Sigmoid colon (tissue), 7 donors: ENCODE measurements at regions of chr12 and their contacts with region 1.

Region 1: DNA sequence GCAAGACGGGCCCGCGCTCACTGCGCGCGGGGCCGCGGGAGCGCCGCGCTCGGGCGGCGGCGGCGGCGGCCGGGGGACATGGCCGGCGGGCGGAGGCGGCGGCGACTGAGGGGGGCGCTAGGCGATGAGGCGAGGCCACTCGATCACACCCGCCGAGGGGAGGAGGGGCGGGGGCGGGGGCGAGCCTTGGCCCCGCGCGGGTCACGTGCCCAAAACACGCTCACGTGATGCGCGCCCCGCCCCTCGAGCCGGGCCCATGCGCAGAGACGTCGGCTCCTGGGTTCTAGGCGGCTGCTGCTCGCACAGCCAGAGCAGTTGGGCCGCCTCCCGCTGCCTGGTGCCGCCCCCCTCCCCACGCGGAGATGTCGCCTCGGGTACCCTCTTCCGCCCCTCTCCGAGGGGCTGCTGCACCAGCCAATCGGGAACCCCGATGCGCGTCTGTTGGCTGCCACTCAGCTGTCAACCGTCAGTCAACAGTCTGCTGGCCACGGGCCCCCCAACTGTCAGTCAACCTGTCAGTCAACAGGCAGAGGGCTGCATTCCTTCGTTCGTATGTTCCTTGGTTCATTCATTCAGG is at the start of gene SPPL3:
- DNase-seq: peak; percentile 95
- H3K4me3 ChIP-seq: peak within 1 kb of the TSS; percentile 72 to 100 (median 92)
- H3K27ac ChIP-seq: peak within 1 kb of the TSS; percentile 84 to 96 (median 89)
- H3K4me1 ChIP-seq: peaks cover 0 to 25% (median 18%) of the 10 kb centered on the region in 4 donors
- H3K27me3 ChIP-seq: no peaks in the 10 kb centered on the region
- CTCF ChIP-seq: no peak
- EP300 ChIP-seq: peak in 1 of 4 donors; percentile 28
- POLR2A ChIP-seq: peak; percentile 27 to 45
- total RNA-seq, gene SPPL3: 17.1 to 28.0 (median 19.3) TPM

Region 2: GRCh38 chr12:120725659-120726509 is 178.4 kb before region 1 on chr12 and contains the start of gene ACADS:
- intact Hi-C with region 1: loop called (anchors 2 kb)
- DNase-seq: peak; percentile 95
- H3K4me3 ChIP-seq: peak within 1 kb of the TSS; percentile 53 to 82 (median 72)
- H3K27ac ChIP-seq: peak within 1 kb of the TSS; percentile 81 to 86 (median 85)
- H3K4me1 ChIP-seq: peaks cover 0 to 21% (median 20%) of the 10 kb centered on the region in 4 donors
- H3K27me3 ChIP-seq: no peaks in the 10 kb centered on the region
- CTCF ChIP-seq: peak in 1 of 4 experiments; percentile 8
- EP300 ChIP-seq: no peak
- POLR2A ChIP-seq: peak; percentile 26 to 28
- total RNA-seq, gene ACADS: 36.8 to 40.3 (median 39.1) TPM

Region 3: DNA sequence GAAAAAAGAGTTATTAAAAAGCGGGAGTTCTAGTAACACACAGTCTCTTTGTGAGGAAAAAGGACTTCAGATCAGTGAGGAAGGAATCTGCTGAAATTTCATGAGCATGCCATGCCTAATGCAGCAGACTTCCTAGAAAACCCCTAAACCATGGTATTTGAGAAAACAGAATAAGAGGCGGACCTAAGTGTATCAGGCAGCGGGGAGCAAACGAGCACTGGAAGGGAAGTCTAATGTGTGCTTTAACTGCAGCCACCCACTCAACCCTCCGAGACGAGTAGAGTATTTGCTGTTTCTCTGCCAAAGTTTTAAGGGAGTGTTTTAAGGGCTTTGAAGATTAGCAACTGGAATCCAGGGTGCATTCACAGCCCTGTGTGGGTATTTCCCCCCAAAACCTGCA is 142.2 kb before region 1 on chr12:
- intact Hi-C with region 1: loop called (anchors 2 kb)
- DNase-seq: no peak
- H3K4me3 ChIP-seq: peak overlapping the region in 1 of 4 donors; percentile 9
- H3K27ac ChIP-seq: peak overlapping the region; percentile 73 to 80 (median 78)
- H3K4me1 ChIP-seq: peaks cover 0 to 22% (median 16%) of the 10 kb centered on the region in 4 donors
- H3K27me3 ChIP-seq: no peaks in the 10 kb centered on the region
- CTCF ChIP-seq: no peak
- EP300 ChIP-seq: no peak
- POLR2A ChIP-seq: no peak

Region 4: DNA sequence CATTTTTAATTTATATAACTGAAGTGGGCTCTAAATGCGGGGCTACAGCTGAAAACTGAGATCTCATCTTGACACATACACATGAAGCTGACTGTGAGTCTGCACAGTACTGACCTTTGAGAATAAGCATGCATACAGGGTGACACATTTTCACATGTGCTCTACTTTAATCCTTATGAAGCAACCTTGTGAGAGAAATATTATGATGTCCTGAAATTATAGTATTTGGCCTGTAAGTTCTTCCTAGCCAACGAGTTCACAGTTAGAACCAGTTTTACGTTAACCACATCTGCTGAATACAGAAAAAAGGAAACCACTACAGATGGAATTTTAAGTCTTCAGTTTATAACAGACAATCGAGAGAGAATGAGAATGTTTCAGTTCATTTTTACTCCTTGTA is 70.4 kb before region 1 on chr12:
- intact Hi-C with region 1: loop called (anchors 5 kb)
- DNase-seq: no peak
- H3K4me3 ChIP-seq: no peak overlapping the region
- H3K27ac ChIP-seq: peak overlapping the region in 3 of 4 donors; percentile 17 to 71 (median 67)
- H3K4me1 ChIP-seq: peaks cover 0 to 84% (median 66%) of the 10 kb centered on the region in 4 donors
- H3K27me3 ChIP-seq: no peaks in the 10 kb centered on the region
- CTCF ChIP-seq: no peak
- EP300 ChIP-seq: peak in 1 of 4 donors; percentile 61
- POLR2A ChIP-seq: no peak